ENCODE measurements at regions of chr1 and their contacts with region 1.

Region 1: GRCh38 chr1:108193333-108193732 is 6.8 kb downstream of the SLC25A24 start:
- DNase-seq: no peak
- ATAC-seq: no peak
- H3K4me3 ChIP-seq: no peak overlapping the region
- H3K4me3 Mint-ChIP-seq: no peak overlapping the region
- H3K27ac ChIP-seq: no peak overlapping the region
- H3K27ac Mint-ChIP-seq: no peak overlapping the region
- H3K4me1 ChIP-seq: no peaks in the 10 kb centered on the region
- H3K4me1 Mint-ChIP-seq: peaks cover 13 to 17% (median 16%) of the 10 kb centered on the region in 3 donors
- H3K27me3 ChIP-seq: no peaks in the 10 kb centered on the region
- H3K27me3 Mint-ChIP-seq: no peaks in the 10 kb centered on the region

Region 2: GRCh38 chr1:108179018-108179417 is 14.3 kb before region 1 on chr1:
- CTCF ChIA-PET with region 1: no interaction called
- POLR2A ChIA-PET with region 1: interaction called in 1 of 2 experiments, 11 read pairs
- DNase-seq: no peak
- ATAC-seq: no peak
- H3K4me3 ChIP-seq: no peak overlapping the region
- H3K4me3 Mint-ChIP-seq: no peak overlapping the region
- H3K27ac ChIP-seq: no peak overlapping the region
- H3K27ac Mint-ChIP-seq: no peak overlapping the region
- H3K4me1 ChIP-seq: no peaks in the 10 kb centered on the region
- H3K4me1 Mint-ChIP-seq: peaks cover 17 to 35% (median 32%) of the 10 kb centered on the region in 3 donors
- H3K27me3 ChIP-seq: no peaks in the 10 kb centered on the region
- H3K27me3 Mint-ChIP-seq: no peaks in the 10 kb centered on the region

Region 3: DNA sequence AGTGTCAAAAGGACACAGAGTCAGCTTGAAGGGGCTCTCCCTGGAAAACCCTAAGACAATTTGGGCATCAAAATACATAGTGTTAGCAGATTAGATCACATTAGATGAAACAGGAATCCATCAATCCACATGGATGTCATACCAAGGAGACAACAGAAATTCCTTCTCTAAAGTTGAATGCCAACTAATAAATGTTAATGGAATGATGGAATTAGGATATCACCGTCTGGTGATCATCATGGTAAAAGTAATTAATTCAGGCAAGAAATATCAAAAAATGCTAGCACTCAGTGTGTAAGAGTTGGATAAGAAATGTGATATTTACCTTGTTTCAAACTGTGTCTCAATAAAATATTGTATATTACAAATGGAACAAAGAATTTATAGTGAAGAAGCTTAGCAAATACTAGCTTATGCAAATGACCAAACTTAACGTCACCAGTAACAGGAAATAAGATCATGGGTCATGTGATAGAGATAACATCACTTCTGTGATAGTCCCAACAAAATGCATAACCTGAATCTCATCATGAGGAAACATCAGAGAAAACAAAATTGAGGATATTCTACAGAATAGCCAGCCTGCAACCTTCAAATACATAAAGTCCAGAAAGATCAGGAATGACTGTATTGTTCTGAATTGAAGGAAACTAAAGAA is 17.8 kb after region 1 on chr1:
- CTCF ChIA-PET with region 1: no interaction called
- POLR2A ChIA-PET with region 1: no interaction called
- DNase-seq: no peak
- ATAC-seq: no peak
- H3K4me3 ChIP-seq: no peak overlapping the region
- H3K4me3 Mint-ChIP-seq: no peak overlapping the region
- H3K27ac ChIP-seq: no peak overlapping the region
- H3K27ac Mint-ChIP-seq: no peak overlapping the region
- H3K4me1 ChIP-seq: peaks cover 0 to 4% of the 10 kb centered on the region in 2 experiments
- H3K4me1 Mint-ChIP-seq: peaks cover 7 to 10% (median 9%) of the 10 kb centered on the region in 3 donors
- H3K27me3 ChIP-seq: peaks cover 0 to 12% of the 10 kb centered on the region in 2 experiments
- H3K27me3 Mint-ChIP-seq: peaks cover 28 to 32% of the 10 kb centered on the region in 2 donors